Breast epithelium (tissue), 4 donors: ENCODE measurements at regions of chr14 and their contacts with region 1.

Region 1: GRCh38 chr14:53156238-53156637 is 3.1 kb upstream of the DDHD1 start:
- DNase-seq: no peak
- H3K4me3 ChIP-seq: no peak overlapping the region
- H3K27ac ChIP-seq: no peak overlapping the region
- H3K4me1 ChIP-seq: peaks cover 0 to 3% of the 10 kb centered on the region in 2 donors
- H3K27me3 ChIP-seq: no peaks in the 10 kb centered on the region
- CTCF ChIP-seq: no peak
- POLR2A ChIP-seq: no peak

Region 2: DNA sequence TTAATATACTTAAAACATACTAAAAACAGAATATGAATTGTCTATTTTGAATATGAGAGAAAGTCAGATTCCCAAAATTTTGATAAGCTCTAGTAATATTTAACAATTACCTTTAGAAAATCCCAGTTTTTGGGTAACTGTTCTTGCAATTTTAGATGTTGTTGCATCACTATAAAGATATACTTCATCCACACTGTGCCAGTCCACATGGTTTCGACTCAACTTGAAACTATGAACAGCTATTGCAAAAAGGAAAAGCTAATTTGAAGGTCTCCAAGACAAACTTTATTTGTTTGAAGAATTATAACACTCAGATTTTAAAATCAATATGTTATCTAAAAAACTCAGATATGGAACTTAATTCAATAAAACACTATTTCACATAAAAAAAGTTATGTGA is 63.0 kb before region 1 on chr14:
- intact Hi-C with region 1: no loop called
- DNase-seq: no peak
- H3K4me3 ChIP-seq: no peak overlapping the region
- H3K27ac ChIP-seq: no peak overlapping the region
- H3K4me1 ChIP-seq: no peaks in the 10 kb centered on the region
- H3K27me3 ChIP-seq: no peaks in the 10 kb centered on the region
- CTCF ChIP-seq: no peak
- POLR2A ChIP-seq: no peak

Region 3: GRCh38 chr14:53113989-53114388 is 42.2 kb before region 1 on chr14:
- intact Hi-C with region 1: no loop called
- DNase-seq: no peak
- H3K4me3 ChIP-seq: no peak overlapping the region
- H3K27ac ChIP-seq: no peak overlapping the region
- H3K4me1 ChIP-seq: no peaks in the 10 kb centered on the region
- H3K27me3 ChIP-seq: no peaks in the 10 kb centered on the region
- CTCF ChIP-seq: no peak
- POLR2A ChIP-seq: no peak

Region 4: GRCh38 chr14:53450871-53451270 is 294.6 kb after region 1 on chr14:
- intact Hi-C with region 1: loop called (anchors 5 kb)
- DNase-seq: no peak
- H3K4me3 ChIP-seq: no peak overlapping the region
- H3K27ac ChIP-seq: no peak overlapping the region
- H3K4me1 ChIP-seq: no peaks in the 10 kb centered on the region
- H3K27me3 ChIP-seq: no peaks in the 10 kb centered on the region
- CTCF ChIP-seq: no peak
- POLR2A ChIP-seq: no peak